ENCODE measurements at regions of chr15 and their contacts with region 1.

Region 1: GRCh38 chr15:84748274-84749110 is at the start of gene ZNF592:
- DNase-seq: no peak
- H3K4me3 ChIP-seq: peak within 1 kb of the TSS; percentile 92 to 95
- H3K27ac ChIP-seq: peak within 1 kb of the TSS; percentile 99
- H3K4me1 ChIP-seq: peaks cover 52% of the 10 kb centered on the region
- H3K27me3 ChIP-seq: no peaks in the 10 kb centered on the region
- CTCF ChIP-seq: no peak
- POLR2A ChIP-seq: peak in 1 of 2 donors; percentile 53
- total RNA-seq, gene ZNF592: 21.6 TPM

Region 2: GRCh38 chr15:84643838-84644237 is 104.7 kb before region 1 on chr15:
- intact Hi-C with region 1: no loop called
- DNase-seq: no peak
- H3K4me3 ChIP-seq: no peak overlapping the region
- H3K27ac ChIP-seq: no peak overlapping the region
- H3K4me1 ChIP-seq: no peaks in the 10 kb centered on the region
- H3K27me3 ChIP-seq: no peaks in the 10 kb centered on the region
- CTCF ChIP-seq: no peak
- POLR2A ChIP-seq: no peak

Region 3: GRCh38 chr15:84658080-84658787 is 90.3 kb before region 1 on chr15 and contains the start of gene NMB:
- intact Hi-C with region 1: loop called (anchors 10 kb)
- DNase-seq: no peak
- H3K4me3 ChIP-seq: peak within 1 kb of the TSS; percentile 60 to 62
- H3K27ac ChIP-seq: peak within 1 kb of the TSS; percentile 88
- H3K4me1 ChIP-seq: peaks cover 24% of the 10 kb centered on the region
- H3K27me3 ChIP-seq: no peaks in the 10 kb centered on the region
- CTCF ChIP-seq: peak; percentile 22 to 58 (median 35)
- POLR2A ChIP-seq: no peak
- total RNA-seq, gene NMB: 12.3 TPM

Region 4: GRCh38 chr15:84716036-84716799 is 32.3 kb before region 1 on chr15 and contains the start of gene SEC11A:
- intact Hi-C with region 1: loop called (anchors 1 kb)
- DNase-seq: peak; percentile 96 to 97
- H3K4me3 ChIP-seq: peak within 1 kb of the TSS; percentile 76 to 91
- H3K27ac ChIP-seq: peak within 1 kb of the TSS; percentile 90
- H3K4me1 ChIP-seq: peaks cover 33% of the 10 kb centered on the region
- H3K27me3 ChIP-seq: no peaks in the 10 kb centered on the region
- CTCF ChIP-seq: no peak
- POLR2A ChIP-seq: peak in 1 of 2 donors; percentile 68
- total RNA-seq, gene SEC11A: 99.2 TPM

Region 5: DNA sequence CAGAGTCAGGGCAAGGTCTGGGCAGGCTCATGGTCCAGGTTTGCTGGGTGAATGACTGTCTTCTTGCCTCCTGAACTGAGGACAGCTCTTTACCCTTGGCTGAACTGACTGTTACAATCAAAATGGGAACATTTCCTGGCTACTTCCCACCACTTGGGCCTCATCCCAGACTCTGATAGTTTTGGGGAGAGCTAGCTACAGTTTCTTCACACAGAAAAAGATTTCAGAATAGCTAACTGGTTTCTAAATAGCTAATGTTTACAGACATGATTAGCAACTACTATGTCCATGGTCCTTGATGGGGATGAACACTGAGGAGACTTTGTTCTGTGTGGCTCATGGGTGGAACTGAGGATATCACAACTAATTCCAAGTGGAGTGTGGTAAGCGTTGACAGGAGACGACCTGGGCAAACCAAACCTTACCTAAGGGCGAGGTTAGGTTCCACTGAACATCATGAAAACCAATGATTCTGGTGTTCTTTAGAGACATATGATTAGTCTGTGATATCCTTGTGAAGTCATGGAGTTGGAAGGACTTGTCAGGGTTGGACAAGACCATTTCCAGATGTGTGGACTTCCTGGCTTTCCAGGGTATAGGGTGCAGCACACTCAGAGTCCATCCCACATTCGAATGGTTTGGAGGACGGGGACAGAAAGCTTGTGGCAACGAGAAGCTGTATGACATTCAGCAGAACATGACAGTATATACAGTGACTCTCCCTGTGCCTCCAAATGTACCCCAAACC is 75.9 kb after region 1 on chr15:
- intact Hi-C with region 1: loop called (anchors 5 kb)
- DNase-seq: no peak
- H3K4me3 ChIP-seq: no peak overlapping the region
- H3K27ac ChIP-seq: peak overlapping the region; percentile 59
- H3K4me1 ChIP-seq: peaks cover 51% of the 10 kb centered on the region
- H3K27me3 ChIP-seq: no peaks in the 10 kb centered on the region
- CTCF ChIP-seq: no peak
- POLR2A ChIP-seq: no peak